ENCODE measurements at regions of chr7 and their contacts with region 1.

Region 1: DNA sequence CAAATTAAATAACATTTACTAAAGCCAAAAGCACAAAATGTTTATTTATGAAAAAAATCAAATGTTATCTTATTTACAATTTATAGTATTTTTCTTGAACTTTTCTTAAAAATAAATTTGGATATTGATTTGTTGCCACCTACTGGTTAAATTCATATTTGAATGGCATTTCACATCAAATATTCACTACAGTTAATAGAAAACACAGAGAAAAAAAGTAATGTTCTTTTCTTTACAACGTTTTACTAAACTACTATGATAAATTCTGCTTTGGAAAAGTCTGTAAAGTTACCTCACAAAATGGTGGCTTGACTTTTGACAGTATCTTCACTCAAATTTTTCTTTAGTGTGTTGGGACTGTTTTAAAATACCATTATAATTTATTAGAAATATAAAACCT is 52.7 kb downstream of the SRPK2 start:
- DNase-seq: no peak
- ATAC-seq: no peak
- H3K4me3 ChIP-seq: no peak overlapping the region
- H3K27ac ChIP-seq: no peak overlapping the region
- H3K4me1 ChIP-seq: no peaks in the 10 kb centered on the region
- H3K27me3 ChIP-seq: no peaks in the 10 kb centered on the region
- CTCF ChIP-seq: peak in 1 of 2 donors; percentile 32

Region 2: DNA sequence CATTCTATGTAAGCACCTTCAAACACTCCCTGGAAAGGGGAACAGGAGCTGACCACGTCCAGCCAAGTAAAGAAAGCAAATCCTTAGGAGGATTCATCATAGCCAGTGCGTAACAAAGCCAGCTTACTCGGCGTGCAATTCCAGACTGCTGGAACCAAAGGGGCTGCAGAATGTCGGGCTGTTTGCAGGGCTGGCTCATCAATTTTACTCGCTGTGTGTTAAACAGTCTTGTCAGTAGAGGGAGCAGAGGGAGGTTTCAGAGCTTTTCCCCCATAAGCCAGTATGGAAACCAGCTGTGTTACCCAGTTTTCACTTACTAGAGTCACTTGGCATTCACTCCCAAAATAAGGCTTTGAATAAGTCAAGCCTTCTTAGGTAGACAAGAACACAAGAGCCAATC is 194.9 kb before region 1 on chr7:
- intact Hi-C with region 1: loop called in 1 of 2 experiments (anchors 10 kb)
- DNase-seq: peak in 2 of 4 donors; percentile 29 to 41
- ATAC-seq: peak; percentile 63
- H3K4me3 ChIP-seq: no peak overlapping the region
- H3K27ac ChIP-seq: no peak overlapping the region
- H3K4me1 ChIP-seq: no peaks in the 10 kb centered on the region
- H3K27me3 ChIP-seq: no peaks in the 10 kb centered on the region
- CTCF ChIP-seq: peak in 1 of 2 donors; percentile 13

Region 3: DNA sequence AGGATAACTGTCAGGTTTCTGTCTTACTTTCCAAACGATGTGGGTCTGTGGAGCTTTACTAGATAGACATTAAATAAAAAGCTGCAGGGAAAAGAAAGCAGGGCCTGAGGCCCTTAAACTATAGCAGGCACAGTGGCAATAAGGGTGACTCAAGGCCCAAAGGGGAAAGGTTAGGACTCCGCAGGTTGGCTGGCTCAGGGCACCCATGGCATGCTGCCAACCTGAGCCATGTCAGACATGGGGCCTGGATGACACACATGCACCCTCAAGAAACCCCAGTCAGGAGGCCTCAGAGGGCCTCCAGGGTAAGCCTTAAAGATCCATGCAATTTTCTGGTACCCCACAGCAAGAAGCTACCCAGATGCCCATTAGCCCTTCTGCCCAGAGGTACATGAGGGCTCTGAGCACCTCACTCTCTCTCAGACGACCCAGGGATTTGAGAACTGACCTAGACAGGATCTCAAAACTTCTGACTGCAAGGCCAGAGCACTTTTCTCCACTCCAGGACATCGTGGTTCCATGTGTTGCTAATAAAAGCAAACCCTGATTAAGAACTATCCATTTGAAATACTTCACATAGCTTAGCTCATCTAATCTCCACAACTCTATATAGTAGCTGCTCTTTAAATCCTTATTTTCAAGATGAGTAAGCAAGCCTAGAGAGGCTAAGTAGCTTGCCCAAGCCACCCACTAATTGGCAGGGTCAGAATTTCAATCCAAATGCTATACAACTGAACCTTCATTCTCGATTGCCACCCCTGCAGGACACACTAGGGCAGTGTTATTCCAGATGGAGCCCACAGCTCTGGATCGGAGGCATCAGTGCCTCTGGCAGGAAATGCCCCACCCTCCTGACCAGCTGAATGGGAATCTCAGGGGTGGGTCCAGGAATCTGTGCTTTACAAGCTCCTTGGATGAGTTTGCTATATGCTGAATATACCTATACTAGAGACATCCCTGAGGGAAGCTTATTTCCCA is 377.8 kb after region 1 on chr7:
- intact Hi-C with region 1: no loop called
- DNase-seq: no peak
- ATAC-seq: no peak
- H3K4me3 ChIP-seq: no peak overlapping the region
- H3K27ac ChIP-seq: no peak overlapping the region
- H3K4me1 ChIP-seq: peaks cover 0 to 7% of the 10 kb centered on the region in 2 donors
- H3K27me3 ChIP-seq: no peaks in the 10 kb centered on the region
- CTCF ChIP-seq: no peak

Measured in left lung (tissue), 14 donors.